Aorta (tissue), 5 donors: ENCODE measurements at regions of chr1 and their contacts with region 1.

Region 1: GRCh38 chr1:200620273-200621131 is at the start of gene KIF14:
- DNase-seq: peak; percentile 97 to 98
- ATAC-seq: peak; percentile 98
- H3K4me3 ChIP-seq: peak within 1 kb of the TSS; percentile 56 to 67
- H3K27ac ChIP-seq: no peak within 1 kb of the TSS
- H3K4me1 ChIP-seq: no peaks in the 10 kb centered on the region
- H3K27me3 ChIP-seq: no peaks in the 10 kb centered on the region
- total RNA-seq, gene KIF14: 0.23 to 0.60 TPM

Region 2: DNA sequence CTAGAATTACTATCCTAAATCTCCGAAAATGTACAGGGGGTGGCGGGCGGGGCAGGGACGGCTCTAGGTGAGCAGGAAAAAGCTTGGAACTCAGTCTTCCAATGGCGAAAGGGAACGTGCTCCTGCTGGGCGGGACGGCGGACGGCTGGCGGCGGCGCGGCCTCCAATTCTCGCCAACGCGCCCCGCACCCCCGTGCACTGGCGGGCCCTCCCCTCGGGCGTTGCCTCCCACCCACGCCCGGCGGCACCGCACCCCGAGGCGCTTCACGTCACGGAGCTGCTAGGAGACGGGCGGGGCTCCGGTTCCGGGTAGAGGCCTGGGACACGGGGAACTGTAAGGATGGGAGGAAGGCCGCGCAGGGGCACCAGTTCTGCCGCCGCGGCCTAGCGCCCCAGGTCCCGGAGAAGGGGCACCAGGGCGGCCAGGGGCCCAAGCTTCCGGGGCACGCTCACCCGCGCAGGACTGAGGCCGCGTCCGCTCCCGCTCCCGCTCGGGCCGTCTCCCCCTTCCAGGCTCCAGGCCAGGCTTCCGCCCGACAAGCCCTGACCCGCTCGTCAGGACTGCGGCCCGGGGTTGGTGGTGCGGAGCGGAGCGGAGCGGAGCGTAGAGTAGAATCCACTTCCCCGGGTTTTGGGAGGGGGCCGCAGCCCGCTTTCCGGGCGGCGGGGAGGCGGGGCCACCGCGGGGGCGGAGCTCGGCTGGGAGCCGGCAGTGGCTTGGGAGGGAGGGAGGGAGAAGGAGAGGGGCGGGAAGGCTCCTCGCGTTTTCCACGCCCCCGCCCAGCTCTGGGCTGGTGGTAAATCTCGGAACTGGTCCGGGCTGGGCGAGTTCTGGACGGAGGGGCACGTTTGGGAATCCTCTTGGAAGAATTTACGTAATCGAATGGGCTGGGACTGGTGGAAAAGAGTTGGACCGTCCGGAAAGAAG is 49.1 kb after region 1 on chr1 and contains the start of gene DDX59:
- intact Hi-C with region 1: loop called (anchors 5 kb)
- DNase-seq: peak; percentile 98
- ATAC-seq: peak; percentile 97
- H3K4me3 ChIP-seq: peak within 1 kb of the TSS; percentile 57 to 71
- H3K27ac ChIP-seq: peak within 1 kb of the TSS; percentile 89 to 92
- H3K4me1 ChIP-seq: peaks cover 1 to 13% of the 10 kb centered on the region in 2 donors
- H3K27me3 ChIP-seq: no peaks in the 10 kb centered on the region
- total RNA-seq, gene DDX59: 22.9 to 28.7 TPM

Region 3: GRCh38 chr1:200738740-200739498 is 118.4 kb after region 1 on chr1 and contains the start of gene CAMSAP2:
- intact Hi-C with region 1: loop called in 1 of 2 experiments (anchors 5 kb)
- DNase-seq: peak; percentile 93 to 96
- ATAC-seq: peak; percentile 93
- H3K4me3 ChIP-seq: peak within 1 kb of the TSS; percentile 70 to 74
- H3K27ac ChIP-seq: peak within 1 kb of the TSS; percentile 87 to 97
- H3K4me1 ChIP-seq: peaks cover 0 to under 1% of the 10 kb centered on the region in 2 donors
- H3K27me3 ChIP-seq: no peaks in the 10 kb centered on the region
- total RNA-seq, gene CAMSAP2: 46.9 to 51.9 TPM

Region 4: GRCh38 chr1:200802865-200803512 is 182.5 kb after region 1 on chr1:
- intact Hi-C with region 1: loop called (anchors 1 to 2 kb)
- DNase-seq: peak; percentile 79 to 83
- ATAC-seq: peak; percentile 94
- H3K4me3 ChIP-seq: no peak overlapping the region
- H3K27ac ChIP-seq: no peak overlapping the region
- H3K4me1 ChIP-seq: no peaks in the 10 kb centered on the region
- H3K27me3 ChIP-seq: no peaks in the 10 kb centered on the region

Region 5: DNA sequence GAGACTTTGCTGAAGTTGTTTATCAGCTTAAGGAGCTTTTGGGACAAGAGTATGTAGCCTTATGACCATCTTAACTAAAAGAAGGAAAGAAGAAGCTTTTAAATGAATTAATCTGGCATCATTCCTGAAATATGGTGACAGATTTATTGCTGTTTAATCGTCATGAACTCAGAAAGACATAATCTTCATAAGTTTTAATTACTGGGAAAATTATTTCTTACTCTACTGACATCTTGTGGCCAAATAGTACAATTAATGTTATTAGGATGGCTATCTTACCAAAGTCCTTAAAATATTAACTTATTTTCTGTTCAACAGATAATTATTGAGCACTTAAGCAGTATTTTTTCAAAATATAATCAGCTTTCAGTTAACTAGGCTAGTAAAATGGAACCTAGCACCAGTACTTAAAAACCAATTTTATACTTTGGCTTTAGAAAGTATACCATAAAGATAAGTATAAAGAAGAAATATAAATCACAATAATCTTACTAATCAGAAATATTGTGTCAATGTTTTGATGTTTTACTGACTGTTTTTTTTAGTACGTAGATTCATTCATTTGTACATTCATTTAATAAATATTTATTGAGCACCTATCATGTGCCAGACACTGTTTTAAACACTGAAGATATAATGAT is 217.5 kb after region 1 on chr1:
- intact Hi-C with region 1: loop called in 1 of 2 experiments (anchors 10 kb)
- DNase-seq: no peak
- ATAC-seq: no peak
- H3K4me3 ChIP-seq: no peak overlapping the region
- H3K27ac ChIP-seq: no peak overlapping the region
- H3K4me1 ChIP-seq: peaks cover 0 to 2% of the 10 kb centered on the region in 2 donors
- H3K27me3 ChIP-seq: no peaks in the 10 kb centered on the region

Region 6: GRCh38 chr1:201114236-201115131 is 494.0 kb after region 1 on chr1:
- intact Hi-C with region 1: loop called in 1 of 2 experiments (anchors 10 kb)
- DNase-seq: peak; percentile 90 to 94
- ATAC-seq: peak; percentile 93
- H3K4me3 ChIP-seq: peak overlapping the region; percentile 18 to 38
- H3K27ac ChIP-seq: no peak overlapping the region
- H3K4me1 ChIP-seq: no peaks in the 10 kb centered on the region
- H3K27me3 ChIP-seq: no peaks in the 10 kb centered on the region